Endothelial cell of umbilical vein (primary cell): ENCODE measurements at regions of chr7 and their contacts with region 1.

Region 1: GRCh38 chr7:54860003-54860775 is 101.2 kb upstream of the SEC61G start:
- DNase-seq: no peak
- H3K4me3 ChIP-seq: no peak overlapping the region
- H3K27ac ChIP-seq: no peak overlapping the region
- H3K4me1 ChIP-seq: no peaks in the 10 kb centered on the region
- H3K27me3 ChIP-seq: peaks cover 12 to 24% of the 10 kb centered on the region in 2 experiments
- CTCF ChIP-seq: no peak
- POLR2A ChIP-seq: no peak

Region 2: GRCh38 chr7:54904130-54904529 is 43.9 kb after region 1 on chr7:
- CTCF ChIA-PET with region 1: no interaction called
- POLR2A ChIA-PET with region 1: no interaction called
- dilution Hi-C with region 1: no loop called
- intact Hi-C with region 1: no loop called
- DNase-seq: no peak
- H3K4me3 ChIP-seq: no peak overlapping the region
- H3K27ac ChIP-seq: no peak overlapping the region
- H3K4me1 ChIP-seq: no peaks in the 10 kb centered on the region
- H3K27me3 ChIP-seq: peaks cover 6 to 18% of the 10 kb centered on the region in 2 experiments
- CTCF ChIP-seq: no peak
- POLR2A ChIP-seq: no peak

Region 3: GRCh38 chr7:54917613-54918391 is 57.6 kb after region 1 on chr7:
- CTCF ChIA-PET with region 1: no interaction called
- POLR2A ChIA-PET with region 1: no interaction called
- dilution Hi-C with region 1: no loop called
- intact Hi-C with region 1: loop called (anchors 10 kb)
- DNase-seq: no peak
- H3K4me3 ChIP-seq: no peak overlapping the region
- H3K27ac ChIP-seq: no peak overlapping the region
- H3K4me1 ChIP-seq: no peaks in the 10 kb centered on the region
- H3K27me3 ChIP-seq: peaks cover 5% of the 10 kb centered on the region in 2 experiments
- CTCF ChIP-seq: no peak
- POLR2A ChIP-seq: no peak

Region 4: GRCh38 chr7:55360486-55360885 is 500.3 kb after region 1 on chr7:
- CTCF ChIA-PET with region 1: no interaction called
- POLR2A ChIA-PET with region 1: no interaction called
- dilution Hi-C with region 1: no loop called
- intact Hi-C with region 1: no loop called
- DNase-seq: no peak
- H3K4me3 ChIP-seq: no peak overlapping the region
- H3K27ac ChIP-seq: no peak overlapping the region
- H3K4me1 ChIP-seq: peaks cover 6% of the 10 kb centered on the region
- H3K27me3 ChIP-seq: peaks cover 4 to 10% of the 10 kb centered on the region in 2 experiments
- CTCF ChIP-seq: no peak
- POLR2A ChIP-seq: no peak